Sciatic nerve (tissue), 2 donors: ENCODE measurements at regions of chr2 and their contacts with region 1.

Region 1: DNA sequence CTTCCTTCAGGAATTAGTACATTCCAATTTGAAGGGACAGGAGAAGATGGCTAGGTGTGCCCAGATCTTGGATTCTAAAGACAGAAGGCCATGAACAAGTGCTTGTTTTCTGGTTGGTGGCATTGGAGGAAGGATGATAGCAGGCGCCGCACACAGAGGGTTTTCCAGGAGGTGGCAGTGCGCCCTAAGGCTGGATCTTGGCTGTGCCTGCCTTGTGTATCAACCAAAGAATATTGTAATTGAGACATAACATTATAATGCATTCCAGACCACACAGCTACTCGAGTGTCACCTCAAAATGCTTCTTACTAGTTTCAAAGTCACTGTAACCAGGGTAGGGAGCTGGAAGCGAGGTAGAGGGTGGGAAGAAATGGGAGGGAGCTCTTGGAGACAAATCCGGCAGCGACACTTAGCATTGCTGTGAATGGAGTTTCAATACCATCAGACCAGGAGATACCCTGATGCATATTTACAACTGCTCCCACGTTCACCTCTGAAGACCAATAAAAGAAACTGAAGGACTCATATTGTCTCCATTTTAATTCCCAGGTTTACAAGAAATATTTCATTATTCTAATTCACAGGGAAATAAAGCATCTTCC is 42.5 kb downstream of the CPO start:
- DNase-seq: peak; percentile 86
- ATAC-seq: peak; percentile 94

Region 2: GRCh38 chr2:206800506-206801417 is 181.1 kb before region 1 on chr2:
- intact Hi-C with region 1: loop called (anchors 5 kb)
- DNase-seq: peak; percentile 71
- ATAC-seq: peak; percentile 88

Region 3: DNA sequence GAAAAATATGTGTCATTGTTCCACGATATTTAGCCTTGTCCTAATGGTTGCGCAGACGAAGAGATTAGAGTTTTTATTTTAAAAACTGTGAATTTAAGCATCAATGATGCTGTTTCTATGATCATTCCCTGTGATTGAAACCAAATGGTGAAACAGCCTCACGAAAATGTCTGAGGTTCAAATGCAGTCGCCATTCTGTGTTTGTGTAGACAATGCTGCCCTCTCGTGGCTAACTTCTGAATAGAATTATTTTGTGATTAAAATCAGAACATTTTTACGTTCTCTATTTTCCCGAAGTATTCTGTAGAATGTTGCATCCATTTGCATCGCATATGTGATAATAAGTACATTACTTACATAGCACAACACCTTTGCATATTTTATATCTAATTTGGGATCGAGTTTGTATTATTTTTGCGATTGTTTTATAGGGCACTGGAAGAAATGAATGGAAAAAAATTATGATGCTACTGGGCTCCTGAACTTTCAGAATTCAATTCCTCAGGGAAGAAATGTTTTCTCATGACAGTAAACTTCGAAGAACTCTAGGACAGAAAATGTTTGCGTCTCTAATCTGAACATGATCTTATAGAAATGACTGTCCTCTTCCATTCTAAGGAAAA is 493.1 kb after region 1 on chr2:
- intact Hi-C with region 1: loop called (anchors 5 kb)
- DNase-seq: no peak
- ATAC-seq: peak; percentile 69